ENCODE measurements at regions of chr19 and their contacts with region 1.

Region 1: GRCh38 chr19:6021878-6022569 is 44.1 kb upstream of the RANBP3 start:
- DNase-seq: peak; percentile 80
- ATAC-seq: peak; percentile 92

Region 2: GRCh38 chr19:5803752-5804515 is 218.1 kb before region 1 on chr19:
- intact Hi-C with region 1: loop called (anchors 1 kb)
- DNase-seq: peak; percentile 92
- ATAC-seq: peak; percentile 87

Region 3: DNA sequence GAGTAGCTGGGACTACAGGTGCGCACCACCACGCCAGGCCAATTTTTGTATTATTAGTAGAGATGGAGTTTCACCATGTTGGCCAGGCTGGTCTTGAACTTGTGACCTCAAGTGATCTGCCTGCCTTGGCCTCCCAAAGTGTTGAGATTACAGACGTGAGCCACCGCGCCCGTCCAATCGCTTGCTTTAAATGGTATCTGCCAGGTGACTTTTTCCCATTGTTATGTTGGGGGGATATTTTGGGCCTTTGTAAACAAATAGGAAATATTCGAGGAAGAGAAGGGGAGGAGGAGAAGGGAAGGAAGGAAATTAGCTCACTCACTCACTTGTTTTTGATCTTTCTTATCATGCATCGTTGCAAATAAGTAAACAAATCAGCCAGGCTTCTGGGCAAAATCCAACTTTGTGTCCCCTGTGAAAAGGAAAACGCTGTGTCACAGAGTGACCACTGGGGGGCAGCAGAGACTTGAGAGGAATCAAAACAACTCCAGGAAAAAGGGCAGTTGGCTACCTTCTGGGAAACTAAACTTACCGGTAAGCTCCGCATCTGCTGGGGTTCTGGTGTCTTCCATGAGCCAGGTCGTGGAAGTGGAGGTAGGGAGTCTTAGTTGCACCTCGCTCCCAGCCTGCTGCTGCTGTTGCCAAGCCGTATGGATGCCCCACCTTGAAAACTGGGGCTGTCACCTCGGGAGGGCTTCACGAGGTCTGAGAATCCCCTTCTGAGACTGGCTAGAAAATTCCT is 34.8 kb before region 1 on chr19:
- intact Hi-C with region 1: loop called (anchors 2 kb)
- DNase-seq: no peak
- ATAC-seq: peak; percentile 47

Measured in Right ventricle myocardium inferior (tissue), 1 donor.